ENCODE measurements at regions of chr1 and their contacts with region 1.

Region 1: GRCh38 chr1:25572708-25573600 is 29.5 kb downstream of the LDLRAP1 start:
- DNase-seq: peak in 8 of 10 donors; percentile 29 to 74 (median 54)
- ATAC-seq: peak; percentile 68 to 72
- H3K4me3 Mint-ChIP-seq: peak overlapping the region in 7 of 10 donors; percentile 6 to 69 (median 52)
- H3K27ac Mint-ChIP-seq: peak overlapping the region; percentile 79 to 94 (median 90)
- H3K4me1 Mint-ChIP-seq: peaks cover 38 to 78% (median 64%) of the 10 kb centered on the region in 4 donors
- H3K27me3 Mint-ChIP-seq: no peaks in the 10 kb centered on the region

Region 2: DNA sequence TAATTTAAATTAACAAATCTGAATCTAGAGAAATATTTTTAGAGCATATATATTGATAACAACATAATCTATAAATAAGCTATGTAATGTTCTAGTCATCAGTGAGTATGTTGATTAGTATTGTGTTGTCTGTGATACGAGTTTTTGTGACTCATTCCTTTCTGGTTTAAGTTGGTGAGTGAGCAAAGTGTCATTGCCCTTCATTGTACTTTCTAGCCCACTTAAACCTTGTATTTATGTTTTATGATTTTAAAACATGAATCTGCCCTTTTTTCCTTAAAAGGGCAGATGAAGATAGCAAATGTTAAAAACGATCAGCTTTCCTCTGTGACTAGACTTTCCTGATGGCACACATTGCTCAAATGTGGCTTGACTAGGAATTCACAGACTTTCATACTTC is 103.8 kb before region 1 on chr1:
- POLR2A ChIA-PET with region 1: no interaction called
- DNase-seq: no peak
- ATAC-seq: no peak
- H3K4me3 Mint-ChIP-seq: no peak overlapping the region
- H3K27ac Mint-ChIP-seq: no peak overlapping the region
- H3K4me1 Mint-ChIP-seq: peaks cover 21 to 61% (median 54%) of the 10 kb centered on the region in 4 donors
- H3K27me3 Mint-ChIP-seq: no peaks in the 10 kb centered on the region

Region 3: DNA sequence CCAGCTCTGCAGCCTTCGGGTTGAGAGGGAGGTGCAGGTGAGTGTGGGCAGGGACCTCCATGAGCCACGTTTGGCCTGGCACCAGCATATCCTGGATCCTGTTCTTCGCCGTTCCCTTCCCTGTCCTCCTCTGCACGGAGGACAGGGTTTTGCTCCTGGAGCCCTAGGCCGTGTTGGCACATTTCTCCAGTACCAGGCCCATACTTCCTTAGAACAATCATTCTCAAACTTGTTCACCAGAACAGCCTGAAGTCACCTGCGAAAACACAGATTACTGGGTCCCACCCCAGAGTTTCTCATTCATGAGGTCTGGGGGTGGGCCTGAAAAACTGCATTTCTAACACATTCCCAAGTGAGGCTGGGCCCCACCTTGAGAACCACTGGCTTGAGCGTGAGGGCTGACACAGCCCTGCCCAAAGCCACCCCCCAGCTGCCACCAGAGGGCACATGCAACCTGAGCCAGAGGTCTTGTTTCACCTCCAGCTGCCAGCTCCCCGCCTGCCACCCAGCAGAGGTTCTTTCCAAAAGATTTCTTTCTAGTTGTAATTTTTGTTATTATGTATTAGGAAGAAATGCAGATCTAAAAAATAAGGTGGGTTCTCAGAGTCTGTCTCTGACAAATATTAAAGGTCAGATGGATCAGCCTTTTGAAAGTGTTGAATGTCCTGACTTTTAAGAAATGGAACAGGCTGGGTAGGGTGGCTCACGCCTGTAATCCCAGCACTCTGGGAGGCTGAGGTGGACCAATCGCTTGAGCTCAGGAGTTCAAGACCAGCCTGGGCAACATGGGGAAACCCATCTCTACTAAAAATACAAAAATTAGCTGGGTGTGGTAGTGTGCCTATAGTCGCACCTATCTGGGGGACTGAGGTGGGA is 69.2 kb before region 1 on chr1:
- POLR2A ChIA-PET with region 1: interaction called, 66 read pairs
- DNase-seq: peak; percentile 64 to 91 (median 72)
- ATAC-seq: peak; percentile 98
- H3K4me3 Mint-ChIP-seq: no peak overlapping the region
- H3K27ac Mint-ChIP-seq: peak overlapping the region; percentile 44 to 86 (median 64)
- H3K4me1 Mint-ChIP-seq: peaks cover 12 to 36% (median 33%) of the 10 kb centered on the region in 4 donors
- H3K27me3 Mint-ChIP-seq: no peaks in the 10 kb centered on the region

Region 4: GRCh38 chr1:25520446-25521061 is 52.4 kb before region 1 on chr1:
- POLR2A ChIA-PET with region 1: interaction called, 50 read pairs
- DNase-seq: peak; percentile 47 to 85 (median 68)
- ATAC-seq: peak; percentile 68 to 82
- H3K4me3 Mint-ChIP-seq: no peak overlapping the region
- H3K27ac Mint-ChIP-seq: peak overlapping the region in 9 of 10 donors; percentile 30 to 92 (median 86)
- H3K4me1 Mint-ChIP-seq: peaks cover 5 to 15% (median 13%) of the 10 kb centered on the region in 4 donors
- H3K27me3 Mint-ChIP-seq: no peaks in the 10 kb centered on the region

Region 5: DNA sequence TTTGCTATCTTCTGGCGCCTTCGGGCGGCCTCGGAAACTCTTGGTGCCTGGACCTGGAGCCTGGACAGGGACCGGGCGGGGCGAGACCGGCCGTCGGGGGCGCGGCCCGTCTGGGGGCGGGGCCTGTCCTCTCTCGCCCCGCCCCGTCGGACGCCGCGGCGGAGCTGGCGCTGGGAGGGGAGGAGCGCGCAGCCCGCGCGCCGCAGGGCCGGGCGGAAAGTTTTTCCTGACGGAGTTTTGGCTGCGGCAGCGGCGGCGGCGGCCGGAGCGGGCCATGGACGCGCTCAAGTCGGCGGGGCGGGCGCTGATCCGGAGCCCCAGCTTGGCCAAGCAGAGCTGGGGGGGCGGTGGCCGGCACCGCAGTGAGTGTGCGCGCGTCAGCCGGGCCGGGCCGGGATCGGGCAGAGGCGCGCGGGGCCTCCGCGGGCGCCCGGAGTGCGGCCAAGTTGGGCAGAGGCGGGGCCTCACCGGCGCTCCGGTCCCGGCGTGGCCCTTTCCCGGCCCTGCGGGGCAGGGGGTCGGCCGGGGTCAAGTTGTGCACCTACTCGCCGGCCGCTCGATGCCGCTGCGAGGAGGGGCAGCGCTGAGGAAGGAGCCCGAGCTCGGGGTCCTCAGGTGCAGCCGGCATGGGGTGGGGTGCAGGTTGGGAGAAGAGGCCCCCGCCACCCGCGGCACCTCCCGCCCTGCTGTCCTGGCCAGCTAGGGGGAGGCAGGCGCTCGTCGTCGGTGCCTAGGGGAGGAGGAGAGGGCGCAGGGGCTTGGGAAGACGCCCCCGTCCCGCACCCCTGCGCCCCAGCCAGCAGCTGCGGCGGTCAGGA is 29.3 kb before region 1 on chr1 and contains the start of gene LDLRAP1:
- POLR2A ChIA-PET with region 1: interaction called, 1,000 read pairs
- DNase-seq: peak in 7 of 10 donors; percentile 50 to 65 (median 55)
- ATAC-seq: peak; percentile 73 to 81
- H3K4me3 Mint-ChIP-seq: peak within 1 kb of the TSS; percentile 89 to 98 (median 95)
- H3K27ac Mint-ChIP-seq: peak within 1 kb of the TSS; percentile 89 to 97 (median 93)
- H3K4me1 Mint-ChIP-seq: peaks cover 22 to 47% (median 46%) of the 10 kb centered on the region in 4 donors
- H3K27me3 Mint-ChIP-seq: no peaks in the 10 kb centered on the region
- polyA plus RNA-seq, gene LDLRAP1: 387 to 877 (median 421) TPM

Region 6: GRCh38 chr1:25562101-25562927 is 10.6 kb before region 1 on chr1:
- POLR2A ChIA-PET with region 1: interaction called, 1,000 read pairs
- DNase-seq: peak; percentile 61 to 99 (median 93)
- ATAC-seq: peak; percentile 75 to 83
- H3K4me3 Mint-ChIP-seq: peak overlapping the region; percentile 96 to 100 (median 99)
- H3K27ac Mint-ChIP-seq: peak overlapping the region; percentile 93 to 100 (median 99)
- H3K4me1 Mint-ChIP-seq: peaks cover 34 to 92% (median 78%) of the 10 kb centered on the region in 4 donors
- H3K27me3 Mint-ChIP-seq: no peaks in the 10 kb centered on the region

Region 7: DNA sequence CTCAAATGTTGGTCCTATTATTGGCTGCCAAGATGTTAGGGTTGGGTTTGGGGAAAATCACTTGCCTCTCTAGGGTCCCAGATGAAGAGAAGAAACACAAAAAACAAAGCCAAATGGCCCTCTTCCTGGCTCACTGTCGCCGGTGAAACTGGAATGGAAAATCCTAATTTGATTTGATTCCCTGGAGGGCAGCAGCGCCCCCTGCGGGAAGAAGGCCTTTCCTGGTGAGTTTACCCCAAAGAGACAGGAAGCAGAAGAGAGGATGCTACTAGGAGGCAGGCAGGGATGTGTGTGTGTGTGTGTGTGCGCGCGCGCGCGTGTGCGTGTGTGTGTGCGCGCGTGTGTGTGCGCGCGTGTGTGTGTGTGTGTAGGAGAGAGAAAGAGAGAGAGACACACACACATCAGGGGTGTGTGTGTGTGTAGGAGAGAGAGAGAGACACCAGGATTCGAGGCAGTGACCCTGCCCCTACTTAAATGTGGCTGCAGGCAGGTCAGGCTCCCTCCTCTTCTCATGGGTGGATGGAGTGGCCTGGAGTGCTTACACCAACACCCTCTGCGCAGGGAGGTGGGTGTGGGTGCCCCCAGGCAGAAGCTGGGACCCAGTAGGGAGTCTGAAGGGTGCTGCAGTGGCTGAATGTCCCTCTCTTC is 224.0 kb after region 1 on chr1:
- POLR2A ChIA-PET with region 1: interaction called, 13 read pairs
- DNase-seq: peak; percentile 70 to 90 (median 83)
- ATAC-seq: peak; percentile 52 to 70
- H3K4me3 Mint-ChIP-seq: peak overlapping the region; percentile 50 to 92 (median 83)
- H3K27ac Mint-ChIP-seq: peak overlapping the region; percentile 91 to 99 (median 96)
- H3K4me1 Mint-ChIP-seq: peaks cover 34 to 74% (median 65%) of the 10 kb centered on the region in 4 donors
- H3K27me3 Mint-ChIP-seq: peaks cover 0 to 2% (median 0%) of the 10 kb centered on the region in 5 donors

Measured in naive thymus-derived CD8-positive, alpha-beta T cell (primary cell).